Psoas muscle (tissue), 8 donors: ENCODE measurements at regions of chr18 and their contacts with region 1.

Region 1: DNA sequence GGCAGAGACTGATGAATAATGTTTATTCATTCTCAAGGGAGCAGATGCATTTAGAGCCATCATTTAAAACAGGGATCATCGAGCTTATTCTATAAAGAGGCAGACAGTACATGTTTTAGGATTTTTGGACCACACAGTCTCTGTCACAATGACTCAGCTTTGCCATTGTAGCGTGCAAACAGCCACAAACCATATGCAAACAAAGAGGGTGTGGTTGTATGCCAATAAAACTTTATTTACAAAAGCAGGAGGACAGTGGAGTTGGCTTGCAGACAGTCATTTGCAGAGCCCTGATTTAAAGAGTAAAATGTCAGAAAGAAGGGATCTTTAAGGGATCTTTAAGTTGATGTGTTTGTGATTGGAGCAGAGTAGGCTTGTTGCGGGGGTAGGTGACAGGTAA is 51.5 kb downstream of the SMIM21 start:
- DNase-seq: no peak
- ATAC-seq: no peak
- H3K4me3 ChIP-seq: no peak overlapping the region
- H3K27ac ChIP-seq: no peak overlapping the region
- H3K4me1 ChIP-seq: no peaks in the 10 kb centered on the region
- H3K27me3 ChIP-seq: no peaks in the 10 kb centered on the region
- CTCF ChIP-seq: no peak

Region 2: DNA sequence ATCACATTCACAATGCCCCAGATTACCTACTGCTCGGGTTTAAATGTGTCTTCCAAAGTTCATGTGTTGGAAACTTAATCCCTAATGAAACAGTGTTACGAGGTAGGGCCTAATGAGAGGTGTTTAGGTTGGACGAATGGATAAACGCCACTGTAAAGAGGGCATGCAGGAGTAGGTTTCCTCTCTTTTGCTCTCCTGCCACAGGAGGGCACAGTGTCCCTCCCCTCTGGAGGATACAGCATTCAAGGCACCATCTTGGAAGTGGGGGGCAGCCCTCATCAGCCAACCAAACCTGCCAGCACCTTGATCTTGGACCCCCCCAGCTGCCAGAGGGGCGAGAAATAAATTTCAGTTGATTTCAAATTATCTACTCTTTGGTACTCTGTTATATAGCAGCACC is 61.9 kb before region 1 on chr18:
- intact Hi-C with region 1: loop called in 1 of 2 experiments (anchors 2 kb)
- DNase-seq: no peak
- ATAC-seq: no peak
- H3K4me3 ChIP-seq: no peak overlapping the region
- H3K27ac ChIP-seq: no peak overlapping the region
- H3K4me1 ChIP-seq: no peaks in the 10 kb centered on the region
- H3K27me3 ChIP-seq: peaks cover 0 to 3% (median 0%) of the 10 kb centered on the region in 3 donors
- CTCF ChIP-seq: no peak